Aorta (tissue), 5 donors: ENCODE measurements at regions of chr9 and their contacts with region 1.

Region 1: GRCh38 chr9:613771-614347 is 227.6 kb upstream of the DMRT1 start:
- DNase-seq: peak; percentile 87 to 92
- ATAC-seq: peak; percentile 93
- H3K4me3 ChIP-seq: no peak overlapping the region
- H3K27ac ChIP-seq: peak overlapping the region in 1 of 2 donors; percentile 26
- H3K4me1 ChIP-seq: peaks cover 0 to 5% of the 10 kb centered on the region in 2 donors
- H3K27me3 ChIP-seq: no peaks in the 10 kb centered on the region

Region 2: DNA sequence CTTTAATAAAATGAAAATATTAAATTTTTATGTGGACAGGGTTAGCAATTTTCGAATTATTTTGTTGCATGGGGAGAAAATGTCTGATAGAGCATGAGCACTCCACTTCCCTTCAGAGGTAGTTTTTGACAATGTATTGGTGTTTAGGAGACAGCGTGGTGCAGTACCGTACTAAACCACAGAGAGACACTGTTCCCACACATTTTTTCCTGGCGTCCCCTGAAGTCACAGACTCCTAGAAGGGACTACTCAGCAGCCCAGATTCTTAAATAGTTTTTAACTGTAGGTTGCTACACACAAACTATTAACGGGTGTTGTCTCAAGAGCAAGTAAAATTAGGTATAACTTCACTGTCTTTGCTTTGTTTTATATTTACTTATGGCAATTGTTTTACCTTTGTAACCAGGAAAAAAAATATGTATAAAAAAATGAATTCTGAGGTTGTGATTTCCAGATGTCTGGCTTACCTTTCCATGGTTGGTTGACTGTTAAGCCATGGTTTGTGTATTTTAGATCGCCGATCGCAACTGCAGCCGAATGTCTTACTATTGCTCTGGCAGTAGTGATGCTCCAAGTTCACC is 228.0 kb before region 1 on chr9:
- intact Hi-C with region 1: loop called in 1 of 2 experiments (anchors 5 kb)
- DNase-seq: no peak
- ATAC-seq: peak; percentile 87
- H3K4me3 ChIP-seq: no peak overlapping the region
- H3K27ac ChIP-seq: no peak overlapping the region
- H3K4me1 ChIP-seq: no peaks in the 10 kb centered on the region
- H3K27me3 ChIP-seq: no peaks in the 10 kb centered on the region

Region 3: GRCh38 chr9:546797-547223 is 67.0 kb before region 1 on chr9:
- intact Hi-C with region 1: no loop called
- DNase-seq: no peak
- ATAC-seq: peak; percentile 69
- H3K4me3 ChIP-seq: no peak overlapping the region
- H3K27ac ChIP-seq: peak overlapping the region in 1 of 2 donors; percentile 17
- H3K4me1 ChIP-seq: peaks cover 3 to 7% of the 10 kb centered on the region in 2 donors
- H3K27me3 ChIP-seq: no peaks in the 10 kb centered on the region

Region 4: DNA sequence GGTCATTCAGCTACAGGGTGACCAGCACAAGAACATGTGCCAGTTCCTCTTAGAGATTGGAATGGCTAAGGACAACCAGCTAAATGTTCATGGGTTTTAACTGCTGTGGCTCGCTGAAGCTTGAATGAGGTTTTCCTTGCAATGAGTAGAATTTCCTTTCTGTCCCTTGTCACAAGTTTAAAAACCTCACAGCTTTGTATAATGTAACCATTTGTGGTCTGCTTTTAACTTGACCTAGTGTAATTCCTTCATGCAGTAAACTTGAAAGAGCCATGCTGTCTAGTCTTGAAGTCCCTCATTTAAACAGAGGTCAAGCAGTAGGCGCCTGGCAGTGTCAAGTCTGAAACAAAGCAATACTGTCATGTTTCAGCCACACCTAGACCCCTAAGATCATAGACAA is 46.4 kb after region 1 on chr9:
- intact Hi-C with region 1: no loop called
- DNase-seq: no peak
- ATAC-seq: no peak
- H3K4me3 ChIP-seq: no peak overlapping the region
- H3K27ac ChIP-seq: no peak overlapping the region
- H3K4me1 ChIP-seq: peaks cover 0 to 3% of the 10 kb centered on the region in 2 donors
- H3K27me3 ChIP-seq: no peaks in the 10 kb centered on the region

Region 5: DNA sequence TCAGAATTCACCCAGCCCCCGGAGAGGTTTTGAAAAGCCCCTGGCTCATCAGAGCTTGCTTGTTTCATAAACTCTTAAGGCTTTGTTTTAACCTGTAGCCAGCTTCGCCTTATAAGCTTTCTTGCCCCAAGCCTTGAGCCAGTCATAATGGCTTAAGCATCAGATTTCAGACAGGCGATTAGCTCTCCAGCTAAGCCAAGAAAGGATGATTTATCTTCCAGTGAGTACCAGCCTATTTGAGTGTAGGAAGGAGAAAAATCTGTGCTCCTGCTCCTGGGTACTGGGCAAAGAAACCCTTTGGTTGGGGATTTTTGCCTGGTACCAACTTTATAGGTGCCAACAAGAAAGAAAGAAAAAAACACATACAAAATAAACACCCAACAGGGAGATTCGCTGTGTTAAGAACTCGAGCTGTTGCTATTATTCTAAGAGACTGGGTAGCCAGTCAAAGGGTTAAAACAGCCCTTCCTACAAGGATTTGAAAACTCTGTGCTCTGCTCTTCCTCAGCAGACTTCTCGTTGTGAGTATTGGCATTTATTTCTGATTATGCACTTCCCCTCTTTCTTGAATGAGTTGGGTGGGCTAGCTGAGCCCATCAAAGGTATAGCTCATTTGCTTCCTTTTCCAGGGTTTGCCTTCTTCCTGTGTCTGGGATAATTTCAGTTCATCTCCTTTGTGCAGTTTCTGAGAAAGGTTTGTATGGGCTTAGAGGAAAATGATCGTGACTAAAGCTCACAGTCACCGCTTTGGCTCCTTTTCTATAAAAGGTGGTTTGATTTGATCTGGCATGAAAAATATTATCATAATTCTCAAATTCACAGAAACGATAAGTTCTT is 70.4 kb after region 1 on chr9:
- intact Hi-C with region 1: loop called in 1 of 2 experiments (anchors 2 kb)
- DNase-seq: no peak
- ATAC-seq: peak; percentile 83
- H3K4me3 ChIP-seq: peak overlapping the region; percentile 14 to 62
- H3K27ac ChIP-seq: peak overlapping the region; percentile 85 to 95
- H3K4me1 ChIP-seq: peaks cover 1 to 9% of the 10 kb centered on the region in 2 donors
- H3K27me3 ChIP-seq: no peaks in the 10 kb centered on the region

Region 6: DNA sequence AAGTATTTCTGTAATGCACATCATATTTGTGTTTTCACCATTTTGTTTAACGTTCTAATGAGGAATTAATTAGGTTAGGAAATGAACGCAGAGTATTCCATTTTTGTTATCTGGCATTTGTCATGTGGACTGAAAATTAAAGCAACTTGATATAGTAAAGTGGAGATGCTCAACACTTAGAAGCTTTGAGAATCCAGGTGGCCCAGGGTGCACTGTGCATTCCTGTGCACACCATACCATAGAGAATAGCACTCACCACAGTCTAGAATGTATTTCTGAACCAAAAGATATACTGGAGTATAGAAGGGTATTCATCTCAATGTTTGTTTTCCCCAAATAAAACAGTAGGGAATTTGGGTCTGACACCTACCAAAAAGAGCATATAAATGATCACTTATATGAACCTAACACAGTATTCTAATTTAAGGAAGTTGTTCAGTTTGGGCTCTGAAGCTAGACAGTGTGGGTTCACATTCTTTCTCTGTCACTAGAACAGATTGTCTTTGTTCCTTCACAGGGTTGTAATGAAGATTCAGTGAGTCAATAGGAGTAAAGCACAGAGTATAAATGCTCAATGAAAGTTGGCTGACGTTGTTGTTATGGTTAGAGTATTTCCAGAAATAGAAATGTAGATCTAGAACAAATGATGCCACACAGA is 102.0 kb after region 1 on chr9:
- intact Hi-C with region 1: loop called in 1 of 2 experiments (anchors 5 kb)
- DNase-seq: no peak
- ATAC-seq: peak; percentile 64
- H3K4me3 ChIP-seq: peak overlapping the region; percentile 74 to 81
- H3K27ac ChIP-seq: peak overlapping the region; percentile 93 to 99
- H3K4me1 ChIP-seq: peaks cover 0 to under 1% of the 10 kb centered on the region in 2 donors
- H3K27me3 ChIP-seq: no peaks in the 10 kb centered on the region

Region 7: GRCh38 chr9:738209-738915 is 124.5 kb after region 1 on chr9:
- intact Hi-C with region 1: loop called in 1 of 2 experiments (anchors 1 kb)
- DNase-seq: peak; percentile 81 to 84
- ATAC-seq: peak; percentile 76
- H3K4me3 ChIP-seq: no peak overlapping the region
- H3K27ac ChIP-seq: peak overlapping the region; percentile 96 to 100
- H3K4me1 ChIP-seq: peaks cover 2 to 6% of the 10 kb centered on the region in 2 donors
- H3K27me3 ChIP-seq: no peaks in the 10 kb centered on the region

Region 8: GRCh38 chr9:763692-764524 is 150.0 kb after region 1 on chr9:
- intact Hi-C with region 1: loop called (anchors 2 kb)
- DNase-seq: peak; percentile 77 to 80
- ATAC-seq: peak; percentile 95
- H3K4me3 ChIP-seq: no peak overlapping the region
- H3K27ac ChIP-seq: no peak overlapping the region
- H3K4me1 ChIP-seq: peaks cover 0 to 2% of the 10 kb centered on the region in 2 donors
- H3K27me3 ChIP-seq: no peaks in the 10 kb centered on the region

Region 9: DNA sequence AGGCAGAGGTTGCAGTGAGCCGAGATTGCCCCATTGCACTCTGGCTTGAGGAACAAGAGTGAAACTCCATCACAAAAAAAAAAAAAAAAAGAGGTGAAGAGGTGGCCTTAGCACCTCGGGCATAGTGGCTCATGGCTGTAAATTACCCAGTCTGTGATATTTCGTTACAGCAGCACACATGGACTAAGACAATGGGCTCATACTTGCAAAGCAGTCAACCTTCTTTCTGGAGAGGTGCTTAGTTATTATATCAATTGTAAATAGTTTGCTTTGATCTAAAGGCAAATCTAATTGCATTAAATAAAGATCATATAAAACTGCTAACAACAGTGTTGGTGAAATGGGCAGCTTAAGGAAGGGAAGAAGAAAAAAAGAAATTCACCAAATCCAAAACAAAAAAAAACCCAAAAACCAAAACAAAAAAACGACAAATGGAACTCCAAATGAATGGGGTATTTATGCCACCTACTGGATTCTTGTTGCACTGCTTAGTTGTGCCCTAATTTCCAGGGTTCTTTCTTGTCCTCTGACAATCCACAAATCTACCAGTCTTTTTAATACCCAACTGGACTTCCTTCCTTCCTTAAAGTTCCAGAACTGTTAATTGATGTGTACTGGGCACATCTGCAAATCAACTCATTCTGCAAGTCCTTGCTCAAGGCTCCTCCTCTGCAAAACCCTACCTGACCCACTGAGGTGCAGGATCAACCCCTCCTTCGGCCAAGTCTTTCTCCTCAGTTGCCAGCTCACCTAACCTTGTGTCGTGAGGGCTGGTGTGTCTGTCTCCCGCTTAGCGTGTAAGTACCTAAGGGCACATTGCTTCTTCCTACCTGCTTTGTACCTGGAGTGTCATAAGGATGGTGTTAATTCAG is 192.7 kb after region 1 on chr9:
- intact Hi-C with region 1: loop called (anchors 1 to 2 kb)
- DNase-seq: no peak
- ATAC-seq: no peak
- H3K4me3 ChIP-seq: no peak overlapping the region
- H3K27ac ChIP-seq: no peak overlapping the region
- H3K4me1 ChIP-seq: no peaks in the 10 kb centered on the region
- H3K27me3 ChIP-seq: no peaks in the 10 kb centered on the region